Activated CD8-positive, alpha-beta memory T cell treated with anti-CD3 and anti-CD28 coated beads, Interleukin-2, amount 10 ng/mL, durations not matched to agents 7 days and 5 days (primary cell): ENCODE measurements at regions of chr1 and their contacts with region 1.

Region 1: DNA sequence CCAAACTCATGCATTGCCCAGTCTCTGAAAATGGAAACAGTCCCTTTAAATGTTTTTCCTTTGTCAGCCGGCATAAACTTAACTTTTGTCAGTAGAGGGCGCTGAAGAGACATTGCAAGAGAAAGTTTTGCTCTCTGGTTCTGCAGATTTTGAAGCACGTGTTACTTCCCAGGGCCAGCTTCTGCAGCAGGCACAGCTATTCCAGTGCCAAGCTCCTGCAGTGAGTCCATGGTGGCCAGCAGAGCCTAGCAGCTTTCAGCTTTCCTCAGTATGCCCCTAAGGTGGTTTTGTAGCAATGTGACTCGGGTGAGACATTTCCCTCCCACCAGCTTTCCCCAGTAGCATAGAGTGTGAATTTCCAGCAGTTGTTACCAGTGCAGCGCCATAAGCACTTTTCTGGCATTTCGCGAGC is 2.6 kb upstream of the IFI44L start:
- DNase-seq: peak; percentile 78
- ATAC-seq: peak; percentile 54
- H3K4me3 Mint-ChIP-seq: no peak overlapping the region
- H3K27ac Mint-ChIP-seq: peak overlapping the region; percentile 70
- H3K4me1 Mint-ChIP-seq: peaks cover 34% of the 10 kb centered on the region
- H3K27me3 Mint-ChIP-seq: peaks cover 15% of the 10 kb centered on the region

Region 2: GRCh38 chr1:78676347-78676982 is 58.8 kb after region 1 on chr1:
- CTCF ChIA-PET with region 1: interaction called, 29 read pairs
- DNase-seq: peak; percentile 65
- ATAC-seq: no peak
- H3K4me3 Mint-ChIP-seq: no peak overlapping the region
- H3K27ac Mint-ChIP-seq: no peak overlapping the region
- H3K4me1 Mint-ChIP-seq: peaks cover 28% of the 10 kb centered on the region
- H3K27me3 Mint-ChIP-seq: peaks cover 7% of the 10 kb centered on the region